Activated T-helper 1 cell treated with anti-CD3 and anti-CD28 coated beads, Interleukin-12 subunit alpha, Interleukin-12 subunit beta, Interleukin-2, Interleukin-4 antibody, amounts not matched to agents 30 ng/mL and 10 ng/mL and 1 ng/mL, durations not matched to agents 14 hours and 24 hours and 36 hours (primary cell): ENCODE measurements at regions of chr3 and their contacts with region 1.

Region 1: DNA sequence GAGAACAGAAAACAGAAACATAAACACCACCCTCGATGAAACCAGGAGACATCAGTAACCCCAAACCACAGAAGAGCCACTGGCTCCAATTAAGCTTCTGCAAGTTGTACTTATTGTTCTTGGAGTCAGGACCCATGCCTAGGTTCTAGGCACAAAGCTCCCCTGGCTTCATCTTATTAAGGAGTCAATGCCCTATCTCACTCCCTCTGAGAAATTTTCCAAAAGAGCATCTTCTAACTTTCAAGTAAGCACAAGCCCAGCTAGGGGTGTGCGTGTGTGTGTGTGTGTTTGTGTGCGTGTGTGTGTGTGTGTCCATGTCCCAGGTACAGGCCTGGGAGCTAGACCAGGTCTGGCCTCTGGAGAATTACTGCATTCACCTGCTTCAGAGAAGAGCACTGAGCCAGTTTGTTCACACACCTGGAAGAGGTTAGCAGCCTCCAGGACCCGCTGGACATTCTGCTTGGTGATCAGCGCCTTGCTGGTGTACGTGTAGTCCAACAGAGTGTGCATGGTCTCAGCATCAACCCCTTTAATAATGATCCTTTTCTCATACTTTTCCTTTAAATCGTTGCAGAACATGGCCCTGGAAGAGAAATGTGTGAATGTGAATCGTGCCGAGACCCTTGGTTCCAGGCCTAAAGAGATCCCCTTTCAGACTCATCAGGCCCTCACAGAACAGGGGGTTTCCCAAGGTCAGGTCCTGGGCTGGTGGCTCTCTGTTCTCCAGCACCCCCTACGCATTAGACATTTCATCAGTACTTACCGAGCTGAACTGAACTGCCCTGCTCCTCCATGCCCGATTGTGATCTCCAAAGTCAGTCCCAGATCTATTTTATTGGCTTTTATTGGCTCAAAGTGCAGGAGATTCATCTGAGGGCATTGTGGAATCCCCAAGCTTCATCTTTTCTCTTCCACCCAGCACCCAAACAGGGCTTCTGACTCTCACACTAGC is 27.8 kb downstream of the KLHL6 start:
- DNase-seq: peak; percentile 15
- H3K4me3 Mint-ChIP-seq: peak overlapping the region; percentile 55
- H3K27ac Mint-ChIP-seq: peak overlapping the region; percentile 82
- H3K4me1 Mint-ChIP-seq: peaks cover 51% of the 10 kb centered on the region
- H3K27me3 Mint-ChIP-seq: no peaks in the 10 kb centered on the region

Region 2: GRCh38 chr3:183540501-183541234 is 13.0 kb after region 1 on chr3:
- intact Hi-C with region 1: loop called (anchors 2 kb)
- DNase-seq: no peak
- H3K4me3 Mint-ChIP-seq: peak overlapping the region; percentile 35
- H3K27ac Mint-ChIP-seq: peak overlapping the region; percentile 84
- H3K4me1 Mint-ChIP-seq: peaks cover 78% of the 10 kb centered on the region
- H3K27me3 Mint-ChIP-seq: no peaks in the 10 kb centered on the region

Region 3: GRCh38 chr3:183613366-183614285 is 85.9 kb after region 1 on chr3:
- intact Hi-C with region 1: no loop called
- DNase-seq: no peak
- H3K4me3 Mint-ChIP-seq: no peak overlapping the region
- H3K27ac Mint-ChIP-seq: no peak overlapping the region
- H3K4me1 Mint-ChIP-seq: no peaks in the 10 kb centered on the region
- H3K27me3 Mint-ChIP-seq: peaks cover 2% of the 10 kb centered on the region

Region 4: GRCh38 chr3:183697610-183698317 is 170.1 kb after region 1 on chr3 and contains the start of gene YEATS2:
- intact Hi-C with region 1: no loop called
- DNase-seq: peak; percentile 65
- H3K4me3 Mint-ChIP-seq: peak within 1 kb of the TSS; percentile 88
- H3K27ac Mint-ChIP-seq: peak within 1 kb of the TSS; percentile 94
- H3K4me1 Mint-ChIP-seq: peaks cover 37% of the 10 kb centered on the region
- H3K27me3 Mint-ChIP-seq: no peaks in the 10 kb centered on the region
- total RNA-seq, gene YEATS2: 54.2 and 57.4 TPM in 2 replicates